Dendritic cell treated with granulocyte-macrophage colony-stimulating factor and Interleukin-4, amounts not matched to agents 40 ng/mL and 50 ng/mL, for 4 days (primary cell): ENCODE measurements at regions of chr17 and their contacts with region 1.

Region 1: GRCh38 chr17:3647769-3648555 is 11.4 kb downstream of the CTNS start:
- H3K4me3 Mint-ChIP-seq: no peak overlapping the region
- H3K27ac Mint-ChIP-seq: no peak overlapping the region
- H3K4me1 Mint-ChIP-seq: peaks cover 48% of the 10 kb centered on the region
- H3K27me3 Mint-ChIP-seq: no peaks in the 10 kb centered on the region

Region 2: GRCh38 chr17:3602499-3602898 is 45.5 kb before region 1 on chr17:
- intact Hi-C with region 1: loop called (anchors 5 kb)
- H3K4me3 Mint-ChIP-seq: no peak overlapping the region
- H3K27ac Mint-ChIP-seq: no peak overlapping the region
- H3K4me1 Mint-ChIP-seq: peaks cover 11% of the 10 kb centered on the region
- H3K27me3 Mint-ChIP-seq: no peaks in the 10 kb centered on the region

Region 3: GRCh38 chr17:4049546-4049945 is 401.6 kb after region 1 on chr17:
- intact Hi-C with region 1: no loop called
- H3K4me3 Mint-ChIP-seq: no peak overlapping the region
- H3K27ac Mint-ChIP-seq: no peak overlapping the region
- H3K4me1 Mint-ChIP-seq: no peaks in the 10 kb centered on the region
- H3K27me3 Mint-ChIP-seq: no peaks in the 10 kb centered on the region

Region 4: DNA sequence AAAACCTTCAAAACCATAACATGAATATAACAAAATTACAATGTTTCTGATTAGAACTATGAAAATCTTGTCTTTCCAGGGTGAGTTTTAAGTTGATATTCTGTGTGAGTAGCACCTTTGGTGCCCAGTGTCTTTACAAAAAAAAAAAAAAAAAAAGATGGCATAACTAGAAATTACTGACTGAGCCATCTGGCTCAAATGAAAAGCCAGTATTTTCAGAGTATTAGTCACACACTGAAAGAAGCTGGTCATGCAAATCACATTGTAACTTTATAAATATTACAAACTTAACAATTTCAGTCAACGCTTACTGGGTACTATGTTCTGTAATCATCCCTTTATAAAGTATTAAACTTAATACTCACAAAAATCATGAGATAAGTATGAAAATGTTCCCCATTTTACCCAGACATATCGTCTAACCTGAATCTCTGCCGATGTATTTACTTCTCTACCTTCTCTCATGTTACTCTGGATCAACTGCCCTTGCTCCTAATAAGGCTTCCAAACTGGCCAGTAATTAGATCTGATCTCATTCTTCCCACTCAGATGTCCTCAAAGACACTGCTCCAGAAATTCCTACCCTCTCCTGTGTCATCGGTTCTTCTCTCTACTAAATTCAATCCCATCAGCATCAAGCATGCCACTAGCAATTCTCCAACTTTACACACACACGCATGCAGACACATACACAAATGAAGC is 693.1 kb after region 1 on chr17:
- intact Hi-C with region 1: no loop called
- H3K4me3 Mint-ChIP-seq: no peak overlapping the region
- H3K27ac Mint-ChIP-seq: no peak overlapping the region
- H3K4me1 Mint-ChIP-seq: peaks cover 12% of the 10 kb centered on the region
- H3K27me3 Mint-ChIP-seq: no peaks in the 10 kb centered on the region